Left ventricle myocardium superior (tissue), 1 donor: ENCODE measurements at regions of chr12 and their contacts with region 1.

Region 1: DNA sequence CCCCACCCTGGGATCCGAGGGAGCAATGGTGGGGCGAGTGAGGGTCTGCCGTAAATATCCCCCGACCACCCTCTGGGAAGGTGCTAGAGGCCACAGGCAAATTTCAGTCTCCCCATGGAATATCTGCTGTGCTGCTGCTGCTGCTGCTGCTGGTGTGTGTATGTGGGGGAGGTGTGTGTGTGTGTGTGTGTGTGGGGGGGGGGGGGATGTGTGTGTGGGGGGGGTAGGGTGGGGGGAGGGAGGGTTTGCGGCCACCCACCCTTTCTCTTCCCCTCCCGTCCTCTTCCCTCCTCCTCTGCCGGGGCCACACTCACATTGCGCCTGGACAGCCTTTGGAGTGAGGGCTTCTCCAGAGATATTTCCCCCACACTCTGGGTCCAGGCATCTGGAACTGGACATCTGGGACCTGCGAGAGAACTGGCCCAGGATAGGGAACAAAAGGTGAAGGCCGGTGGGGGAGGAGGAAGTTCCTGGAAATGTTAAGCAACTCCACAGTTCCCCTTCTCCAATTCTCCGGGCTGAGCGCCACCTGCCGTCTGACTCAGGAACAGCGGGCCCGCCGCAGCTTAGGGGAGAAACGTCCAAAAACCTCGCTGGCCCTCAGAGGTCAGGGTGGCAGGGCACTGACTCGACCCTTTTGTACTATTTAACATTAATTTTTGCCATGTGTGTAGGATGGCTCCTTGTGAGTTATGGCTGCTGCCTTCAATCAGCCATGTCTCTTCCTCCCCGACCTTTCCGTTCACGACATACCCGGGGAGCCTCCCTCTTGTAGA is at the start of gene C1RL:
- DNase-seq: peak; percentile 93
- ATAC-seq: peak; percentile 87
- total RNA-seq, gene C1RL: 10.9 TPM

Region 2: DNA sequence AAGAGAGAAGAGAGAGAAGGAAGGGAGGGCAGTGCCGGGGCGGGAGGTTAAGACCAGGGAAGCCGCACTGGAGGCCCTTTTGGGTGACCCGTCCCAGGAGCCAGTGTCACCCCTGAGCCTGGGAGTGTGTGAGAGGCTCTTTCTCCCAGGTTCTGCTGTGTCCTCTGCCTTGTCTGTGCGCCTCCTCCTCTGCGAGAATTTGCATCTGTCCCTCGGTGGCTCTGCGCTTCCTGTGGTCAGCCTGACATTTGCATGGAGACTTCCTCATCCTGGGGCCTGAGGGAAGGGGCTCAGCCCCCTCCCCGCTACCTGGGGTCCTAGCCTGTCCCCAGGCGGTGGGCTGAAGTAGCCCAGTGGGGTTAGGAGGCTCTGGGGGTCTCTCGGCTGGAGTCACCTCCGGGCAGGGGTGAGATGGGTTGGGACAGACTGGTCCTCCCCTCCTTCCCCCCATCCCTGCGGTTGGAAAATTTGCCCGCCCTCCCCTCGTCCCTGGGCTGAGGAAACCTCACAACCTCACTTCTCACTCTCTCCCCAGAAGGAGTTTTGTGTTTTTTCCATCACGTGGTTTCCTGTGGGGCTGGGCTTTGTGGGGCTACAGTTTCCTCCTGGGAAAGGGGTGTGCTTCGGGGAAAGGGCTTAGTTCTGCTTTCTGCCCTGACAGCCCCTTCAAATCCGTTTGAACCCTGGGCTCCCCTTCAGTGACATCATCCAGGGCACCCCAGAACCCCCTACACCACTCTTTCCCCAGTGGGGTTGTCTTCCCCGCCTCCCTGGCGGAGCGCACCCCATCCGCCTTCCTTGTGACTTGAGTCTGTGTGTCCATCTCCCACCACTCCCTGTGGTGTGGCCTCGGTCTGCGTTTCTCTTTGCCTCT is 155.3 kb before region 1 on chr12:
- intact Hi-C with region 1: loop called (anchors 10 kb)
- DNase-seq: peak; percentile 53
- ATAC-seq: peak; percentile 66

Region 3: GRCh38 chr12:7060353-7060954 is 48.5 kb before region 1 on chr12 and contains the start of gene C1S:
- intact Hi-C with region 1: loop called (anchors 10 kb)
- DNase-seq: peak; percentile 71
- ATAC-seq: peak; percentile 98
- total RNA-seq, gene C1S: 116 TPM